Calu3 (cell line): ENCODE measurements at regions of chr3 and their contacts with region 1.

Region 1: DNA sequence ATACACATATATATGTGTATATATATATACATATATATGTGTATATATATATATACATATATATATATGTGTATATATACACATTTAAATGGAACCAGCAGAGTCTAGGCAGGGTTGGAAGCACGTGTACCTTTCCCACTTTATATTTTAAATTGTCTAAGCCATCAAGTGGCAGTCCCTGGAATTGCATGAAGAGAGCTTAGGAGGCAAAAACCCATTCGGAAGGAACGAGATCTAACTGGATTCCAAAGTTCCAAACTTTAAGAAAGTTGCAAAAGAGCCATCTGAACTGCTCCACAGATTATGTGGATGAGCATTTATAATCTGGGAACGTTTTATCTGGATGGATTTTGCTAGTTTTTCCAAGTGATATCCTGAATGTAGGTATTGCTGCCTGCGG is 186.5 kb downstream of the FOXP1 start:
- DNase-seq: peak; percentile 37
- H3K4me3 Mint-ChIP-seq: no peak overlapping the region
- H3K27ac Mint-ChIP-seq: no peak overlapping the region
- H3K4me1 Mint-ChIP-seq: peaks cover 29% of the 10 kb centered on the region
- H3K27me3 Mint-ChIP-seq: no peaks in the 10 kb centered on the region
- CTCF ChIP-seq: peak; percentile 22

Region 2: GRCh38 chr3:70982700-70983140 is 414.3 kb before region 1 on chr3:
- CTCF ChIA-PET with region 1: no interaction called
- intact Hi-C with region 1: no loop called
- DNase-seq: peak; percentile 69
- H3K4me3 Mint-ChIP-seq: peak overlapping the region; percentile 54
- H3K27ac Mint-ChIP-seq: peak overlapping the region; percentile 95
- H3K4me1 Mint-ChIP-seq: peaks cover 43% of the 10 kb centered on the region
- H3K27me3 Mint-ChIP-seq: no peaks in the 10 kb centered on the region
- CTCF ChIP-seq: no peak

Region 3: GRCh38 chr3:71247221-71247976 is 149.6 kb before region 1 on chr3:
- CTCF ChIA-PET with region 1: no interaction called
- intact Hi-C with region 1: loop called (anchors 10 kb)
- DNase-seq: peak; percentile 58
- H3K4me3 Mint-ChIP-seq: peak overlapping the region; percentile 56
- H3K27ac Mint-ChIP-seq: peak overlapping the region; percentile 89
- H3K4me1 Mint-ChIP-seq: peaks cover 55% of the 10 kb centered on the region
- H3K27me3 Mint-ChIP-seq: no peaks in the 10 kb centered on the region
- CTCF ChIP-seq: no peak

Region 4: GRCh38 chr3:71456156-71456555 is 59.1 kb after region 1 on chr3:
- CTCF ChIA-PET with region 1: no interaction called
- intact Hi-C with region 1: loop called (anchors 10 kb)
- DNase-seq: no peak
- H3K4me3 Mint-ChIP-seq: no peak overlapping the region
- H3K27ac Mint-ChIP-seq: no peak overlapping the region
- H3K4me1 Mint-ChIP-seq: peaks cover 23% of the 10 kb centered on the region
- H3K27me3 Mint-ChIP-seq: no peaks in the 10 kb centered on the region
- CTCF ChIP-seq: no peak

Region 5: GRCh38 chr3:71478568-71478967 is 81.5 kb after region 1 on chr3:
- CTCF ChIA-PET with region 1: no interaction called
- intact Hi-C with region 1: no loop called
- DNase-seq: no peak
- H3K4me3 Mint-ChIP-seq: no peak overlapping the region
- H3K27ac Mint-ChIP-seq: no peak overlapping the region
- H3K4me1 Mint-ChIP-seq: no peaks in the 10 kb centered on the region
- H3K27me3 Mint-ChIP-seq: no peaks in the 10 kb centered on the region
- CTCF ChIP-seq: no peak